Mammary epithelial cell (primary cell): ENCODE measurements at regions of chr15 and their contacts with region 1.

Region 1: GRCh38 chr15:29511663-29512062 is 242.0 kb upstream of the NSMCE3 start:
- DNase-seq: no peak
- H3K4me3 ChIP-seq: no peak overlapping the region
- H3K27ac ChIP-seq: no peak overlapping the region
- H3K4me1 ChIP-seq: no peaks in the 10 kb centered on the region
- H3K27me3 ChIP-seq: no peaks in the 10 kb centered on the region
- CTCF ChIP-seq: no peak

Region 2: GRCh38 chr15:29449136-29449535 is 62.5 kb before region 1 on chr15:
- CTCF ChIA-PET with region 1: no interaction called
- dilution Hi-C with region 1: loop called (anchors 10 kb)
- in situ Hi-C with region 1: no loop called
- intact Hi-C with region 1: no loop called
- DNase-seq: no peak
- H3K4me3 ChIP-seq: no peak overlapping the region
- H3K27ac ChIP-seq: no peak overlapping the region
- H3K4me1 ChIP-seq: no peaks in the 10 kb centered on the region
- H3K27me3 ChIP-seq: no peaks in the 10 kb centered on the region
- CTCF ChIP-seq: no peak

Region 3: DNA sequence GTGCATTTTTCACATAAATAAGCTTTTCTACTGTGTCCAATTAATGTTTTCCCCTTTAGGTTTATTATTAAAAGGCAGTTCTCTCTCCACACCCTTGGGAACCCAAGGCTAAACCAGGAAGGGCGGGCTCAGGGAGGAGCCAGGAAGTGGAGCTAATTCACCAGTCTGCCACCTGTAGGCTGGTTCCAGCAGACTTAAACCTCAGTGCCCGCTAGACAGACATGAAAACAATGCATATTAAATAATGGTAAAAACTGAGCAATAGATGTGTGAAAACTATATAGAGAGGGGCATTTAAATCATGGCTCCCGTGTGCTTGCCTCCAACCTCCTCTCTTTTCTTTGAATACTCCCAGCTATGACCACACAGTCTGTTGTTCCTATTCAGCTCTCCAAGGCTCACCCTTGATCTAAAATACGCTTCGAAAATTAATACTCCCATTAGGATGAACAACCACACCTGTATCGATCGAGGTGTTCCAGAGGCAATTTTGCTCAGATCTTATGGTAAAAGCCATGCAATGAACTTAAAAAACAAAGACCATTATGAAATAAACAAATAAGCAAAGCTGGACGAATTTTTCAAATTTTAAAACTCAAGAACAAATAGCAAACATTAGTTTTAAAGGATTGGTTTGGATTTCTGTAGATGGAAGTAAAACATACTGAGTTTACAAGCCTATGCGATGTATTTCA is 57.3 kb after region 1 on chr15:
- CTCF ChIA-PET with region 1: no interaction called
- dilution Hi-C with region 1: no loop called
- in situ Hi-C with region 1: no loop called
- intact Hi-C with region 1: no loop called
- DNase-seq: peak; percentile 26
- H3K4me3 ChIP-seq: no peak overlapping the region
- H3K27ac ChIP-seq: no peak overlapping the region
- H3K4me1 ChIP-seq: peaks cover 8% of the 10 kb centered on the region
- H3K27me3 ChIP-seq: peaks cover 30% of the 10 kb centered on the region
- CTCF ChIP-seq: peak; percentile 9 to 43